CD4-positive, alpha-beta memory T cell (primary cell): ENCODE measurements at regions of chr3 and their contacts with region 1.

Region 1: DNA sequence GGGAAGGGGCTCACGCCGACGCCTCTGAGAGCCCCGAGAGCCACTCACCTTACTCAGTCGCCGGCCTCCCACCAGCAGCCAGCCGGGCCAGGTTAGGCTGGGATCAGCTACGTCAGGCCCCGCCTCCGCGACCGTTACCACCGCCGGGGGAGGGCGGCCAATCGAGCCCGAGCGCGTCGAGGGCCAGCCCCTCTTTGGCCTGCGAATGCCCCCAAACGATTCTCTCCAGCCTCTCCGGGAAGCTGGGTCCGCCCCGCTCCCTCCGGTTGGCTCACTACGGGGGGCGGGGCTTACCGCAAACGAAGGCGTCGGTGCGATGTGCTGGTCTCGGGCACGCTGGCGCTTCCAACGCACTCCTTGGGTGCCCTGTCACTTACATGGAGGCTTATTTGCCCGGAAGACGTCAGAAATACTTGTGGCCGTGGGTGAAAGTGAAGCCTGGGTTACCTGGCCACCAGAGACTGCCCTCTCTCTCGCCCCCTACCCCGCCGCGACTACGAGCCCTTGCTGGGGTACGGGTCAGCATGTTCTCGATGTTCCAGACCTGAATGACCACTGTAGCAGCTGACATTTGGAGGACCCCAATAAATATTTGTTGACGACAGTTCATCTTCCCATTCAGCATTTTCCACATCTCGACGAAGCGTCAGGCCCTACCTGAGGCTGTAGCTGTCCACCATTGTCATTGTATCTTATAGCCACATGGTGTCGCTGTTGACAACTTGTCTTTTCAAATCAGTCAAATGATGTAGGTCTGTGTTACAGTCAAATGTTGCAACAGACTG is at the start of gene CEP70:
- DNase-seq: peak; percentile 90 to 93 (median 92)
- H3K4me3 ChIP-seq: peak within 1 kb of the TSS; percentile 94 to 99
- H3K4me3 Mint-ChIP-seq: peak within 1 kb of the TSS; percentile 85 to 97 (median 92)
- H3K27ac ChIP-seq: peak within 1 kb of the TSS; percentile 75
- H3K27ac Mint-ChIP-seq: peak within 1 kb of the TSS; percentile 89 to 100 (median 97)
- H3K4me1 ChIP-seq: peaks cover 5% of the 10 kb centered on the region
- H3K4me1 Mint-ChIP-seq: peaks cover 6 to 12% (median 9%) of the 10 kb centered on the region in 4 donors
- H3K27me3 ChIP-seq: no peaks in the 10 kb centered on the region
- H3K27me3 Mint-ChIP-seq: no peaks in the 10 kb centered on the region
- total RNA-seq, gene CEP70: 27.1 to 28.0 TPM

Region 2: GRCh38 chr3:138068579-138069174 is 525.7 kb before region 1 on chr3:
- CTCF ChIA-PET with region 1: no interaction called
- POLR2A ChIA-PET with region 1: no interaction called
- intact Hi-C with region 1: loop called (anchors 5 kb)
- DNase-seq: peak; percentile 54 to 61 (median 59)
- H3K4me3 ChIP-seq: no peak overlapping the region
- H3K4me3 Mint-ChIP-seq: no peak overlapping the region
- H3K27ac ChIP-seq: no peak overlapping the region
- H3K27ac Mint-ChIP-seq: no peak overlapping the region
- H3K4me1 ChIP-seq: no peaks in the 10 kb centered on the region
- H3K4me1 Mint-ChIP-seq: no peaks in the 10 kb centered on the region
- H3K27me3 ChIP-seq: no peaks in the 10 kb centered on the region
- H3K27me3 Mint-ChIP-seq: peaks cover 7 to 16% of the 10 kb centered on the region in 2 donors

Region 3: GRCh38 chr3:138329127-138329983 is 265.0 kb before region 1 on chr3 and contains the start of gene NME9:
- CTCF ChIA-PET with region 1: no interaction called
- POLR2A ChIA-PET with region 1: no interaction called
- intact Hi-C with region 1: loop called (anchors 2 kb)
- DNase-seq: peak; percentile 85 to 90 (median 89)
- H3K4me3 ChIP-seq: peak within 1 kb of the TSS; percentile 49 to 68
- H3K4me3 Mint-ChIP-seq: peak within 1 kb of the TSS; percentile 95 to 99 (median 98)
- H3K27ac ChIP-seq: peak within 1 kb of the TSS; percentile 72
- H3K27ac Mint-ChIP-seq: peak within 1 kb of the TSS; percentile 81 to 99 (median 98)
- H3K4me1 ChIP-seq: peaks cover 10% of the 10 kb centered on the region
- H3K4me1 Mint-ChIP-seq: peaks cover 17 to 41% (median 25%) of the 10 kb centered on the region in 4 donors
- H3K27me3 ChIP-seq: no peaks in the 10 kb centered on the region
- H3K27me3 Mint-ChIP-seq: no peaks in the 10 kb centered on the region
- total RNA-seq, gene NME9: 1.0 to 1.4 TPM

Region 4: GRCh38 chr3:138608322-138609135 is 14.2 kb after region 1 on chr3 and contains the start of gene FAIM:
- CTCF ChIA-PET with region 1: interaction called, 14 read pairs
- POLR2A ChIA-PET with region 1: interaction called, 45 read pairs
- intact Hi-C with region 1: loop called (anchors 1 kb)
- DNase-seq: peak; percentile 71 to 84 (median 78)
- H3K4me3 ChIP-seq: peak within 1 kb of the TSS; percentile 45 to 48
- H3K4me3 Mint-ChIP-seq: peak within 1 kb of the TSS; percentile 87 to 99 (median 88)
- H3K27ac ChIP-seq: peak within 1 kb of the TSS; percentile 67
- H3K27ac Mint-ChIP-seq: peak within 1 kb of the TSS; percentile 93 to 100 (median 96)
- H3K4me1 ChIP-seq: peaks cover 13% of the 10 kb centered on the region
- H3K4me1 Mint-ChIP-seq: peaks cover 9 to 23% (median 16%) of the 10 kb centered on the region in 4 donors
- H3K27me3 ChIP-seq: no peaks in the 10 kb centered on the region
- H3K27me3 Mint-ChIP-seq: peaks cover 0 to 5% of the 10 kb centered on the region in 2 donors
- total RNA-seq, gene FAIM: 4.6 to 5.0 TPM

Region 5: GRCh38 chr3:138834359-138835212 is 240.2 kb after region 1 on chr3 and contains the start of gene PIK3CB:
- CTCF ChIA-PET with region 1: interaction called, 3 read pairs
- POLR2A ChIA-PET with region 1: interaction called, 10 read pairs
- intact Hi-C with region 1: loop called (anchors 2 kb)
- DNase-seq: peak; percentile 81 to 89 (median 88)
- H3K4me3 ChIP-seq: peak within 1 kb of the TSS; percentile 64 to 76
- H3K4me3 Mint-ChIP-seq: peak within 1 kb of the TSS; percentile 90 to 98 (median 95)
- H3K27ac ChIP-seq: peak within 1 kb of the TSS; percentile 76
- H3K27ac Mint-ChIP-seq: peak within 1 kb of the TSS; percentile 96 to 99 (median 97)
- H3K4me1 ChIP-seq: peaks cover 21% of the 10 kb centered on the region
- H3K4me1 Mint-ChIP-seq: peaks cover 19 to 37% (median 29%) of the 10 kb centered on the region in 4 donors
- H3K27me3 ChIP-seq: no peaks in the 10 kb centered on the region
- H3K27me3 Mint-ChIP-seq: no peaks in the 10 kb centered on the region
- total RNA-seq, gene PIK3CB: 44.8 to 52.1 TPM

Region 6: DNA sequence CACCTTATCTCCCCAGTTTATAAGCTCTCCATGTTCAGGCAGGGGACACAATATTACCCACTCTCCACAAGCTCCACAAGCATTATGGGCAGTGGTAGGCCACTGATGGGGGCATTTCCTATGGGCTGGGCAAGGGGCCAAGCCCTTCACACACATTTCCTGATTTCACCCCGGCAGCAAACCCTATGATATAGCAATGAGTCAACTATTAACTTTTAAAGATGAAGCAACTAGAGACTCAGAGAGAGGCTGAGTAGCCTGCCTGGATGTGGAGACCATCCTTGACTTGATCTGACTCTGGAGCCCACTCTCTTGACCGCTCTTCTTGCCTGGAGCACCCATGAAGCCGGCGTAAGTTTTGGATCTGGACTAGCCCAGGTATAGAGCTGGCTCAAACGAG is 380.1 kb after region 1 on chr3:
- CTCF ChIA-PET with region 1: no interaction called
- POLR2A ChIA-PET with region 1: no interaction called
- intact Hi-C with region 1: no loop called
- DNase-seq: no peak
- H3K4me3 ChIP-seq: no peak overlapping the region
- H3K4me3 Mint-ChIP-seq: no peak overlapping the region
- H3K27ac ChIP-seq: no peak overlapping the region
- H3K27ac Mint-ChIP-seq: no peak overlapping the region
- H3K4me1 ChIP-seq: no peaks in the 10 kb centered on the region
- H3K4me1 Mint-ChIP-seq: no peaks in the 10 kb centered on the region
- H3K27me3 ChIP-seq: no peaks in the 10 kb centered on the region
- H3K27me3 Mint-ChIP-seq: peaks cover 18 to 21% of the 10 kb centered on the region in 2 donors

Region 7: DNA sequence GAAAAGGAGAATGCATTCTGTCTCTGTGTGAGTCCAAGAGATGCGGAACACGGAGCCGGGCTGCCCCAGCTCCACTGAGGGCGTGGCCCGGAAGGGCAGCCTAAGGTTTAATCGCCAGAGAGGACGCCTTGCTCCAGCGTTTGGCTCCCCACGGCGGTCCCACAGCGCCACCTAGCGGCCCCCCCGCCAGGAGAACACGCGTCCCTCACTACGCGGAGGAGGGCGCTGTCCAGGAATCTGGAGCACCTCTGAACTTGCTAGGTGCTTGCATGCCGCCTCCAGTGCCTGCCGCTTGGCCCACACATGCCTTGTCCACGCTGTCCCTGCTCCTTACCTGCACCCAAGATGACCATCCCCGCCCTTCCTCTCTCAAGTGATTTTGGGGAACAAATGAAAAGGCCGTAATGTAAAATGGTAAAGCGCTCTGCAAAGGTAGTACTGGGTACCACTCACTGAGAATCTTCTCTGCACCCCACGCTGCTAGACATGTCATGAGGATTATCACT is 735.1 kb after region 1 on chr3:
- CTCF ChIA-PET with region 1: no interaction called
- POLR2A ChIA-PET with region 1: no interaction called
- intact Hi-C with region 1: loop called (anchors 5 kb)
- DNase-seq: peak; percentile 79 to 82 (median 81)
- H3K4me3 ChIP-seq: peak overlapping the region in 1 of 2 donors; percentile 8
- H3K4me3 Mint-ChIP-seq: peak overlapping the region; percentile 66 to 84 (median 78)
- H3K27ac ChIP-seq: no peak overlapping the region
- H3K27ac Mint-ChIP-seq: no peak overlapping the region
- H3K4me1 ChIP-seq: peaks cover 5% of the 10 kb centered on the region
- H3K4me1 Mint-ChIP-seq: peaks cover 5 to 20% (median 12%) of the 10 kb centered on the region in 4 donors
- H3K27me3 ChIP-seq: peaks cover 4% of the 10 kb centered on the region
- H3K27me3 Mint-ChIP-seq: peaks cover 22 to 26% of the 10 kb centered on the region in 2 donors